ENCODE measurements at regions of chr16 and their contacts with region 1.

Region 1: DNA sequence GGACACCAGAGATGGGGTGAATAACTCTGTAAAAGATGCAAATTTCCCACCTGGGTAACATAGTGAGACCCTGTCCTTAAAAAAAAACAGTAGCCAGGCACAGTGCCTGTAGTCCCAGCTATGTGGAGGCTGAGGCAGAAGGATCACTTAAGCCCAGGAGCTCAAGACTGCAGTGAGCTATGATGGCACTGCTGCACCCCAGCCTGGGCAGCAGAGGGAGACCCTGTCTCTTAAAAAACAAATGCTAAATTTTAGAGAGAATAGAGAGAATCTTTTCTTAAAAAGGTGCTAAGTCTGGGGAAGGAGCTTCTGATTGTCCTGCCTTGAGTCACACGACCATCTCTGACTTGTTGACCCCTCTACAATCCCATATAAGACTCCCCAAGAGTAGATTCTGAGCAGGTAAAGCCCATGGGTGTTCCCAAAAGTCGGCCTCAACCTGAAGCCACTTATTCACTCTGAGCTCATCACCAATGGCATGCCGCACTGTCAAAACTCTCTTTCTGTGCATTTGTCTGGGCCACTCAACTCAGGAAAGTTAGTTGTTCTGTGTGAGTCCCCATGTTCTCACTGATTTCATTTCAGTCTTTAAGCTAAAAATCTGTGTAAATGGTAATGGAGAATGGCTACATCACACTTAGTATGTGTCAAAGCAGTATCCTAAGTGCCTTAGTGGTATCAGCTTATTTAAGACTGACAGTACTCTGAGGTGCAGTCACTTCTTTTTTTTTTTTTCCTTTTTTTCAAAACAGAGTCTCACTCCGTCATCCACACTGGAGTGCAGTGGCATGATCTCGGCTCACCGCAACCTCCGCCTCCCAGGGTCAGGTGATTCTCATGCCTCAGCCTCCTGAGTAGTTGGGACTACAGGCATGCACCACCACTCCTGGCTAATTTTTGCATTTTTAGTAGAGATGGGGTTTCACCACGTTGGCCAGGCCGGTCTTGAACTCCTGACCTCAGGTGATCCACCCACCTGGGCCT is 41.6 kb downstream of the PRKCB start:
- DNase-seq: peak in 5 of 9 donors; percentile 31 to 43 (median 35)
- ATAC-seq: peak; percentile 43
- H3K4me3 ChIP-seq: no peak overlapping the region
- H3K4me3 Mint-ChIP-seq: peak overlapping the region in 1 of 10 donors; percentile 1
- H3K27ac ChIP-seq: no peak overlapping the region
- H3K27ac Mint-ChIP-seq: peak overlapping the region in 6 of 9 donors; percentile 10 to 93 (median 74)
- H3K4me1 ChIP-seq: peaks cover 26 to 27% of the 10 kb centered on the region in 2 donors
- H3K4me1 Mint-ChIP-seq: peaks cover 53 to 77% (median 71%) of the 10 kb centered on the region in 7 donors
- H3K27me3 ChIP-seq: no peaks in the 10 kb centered on the region
- H3K27me3 Mint-ChIP-seq: no peaks in the 10 kb centered on the region

Region 2: DNA sequence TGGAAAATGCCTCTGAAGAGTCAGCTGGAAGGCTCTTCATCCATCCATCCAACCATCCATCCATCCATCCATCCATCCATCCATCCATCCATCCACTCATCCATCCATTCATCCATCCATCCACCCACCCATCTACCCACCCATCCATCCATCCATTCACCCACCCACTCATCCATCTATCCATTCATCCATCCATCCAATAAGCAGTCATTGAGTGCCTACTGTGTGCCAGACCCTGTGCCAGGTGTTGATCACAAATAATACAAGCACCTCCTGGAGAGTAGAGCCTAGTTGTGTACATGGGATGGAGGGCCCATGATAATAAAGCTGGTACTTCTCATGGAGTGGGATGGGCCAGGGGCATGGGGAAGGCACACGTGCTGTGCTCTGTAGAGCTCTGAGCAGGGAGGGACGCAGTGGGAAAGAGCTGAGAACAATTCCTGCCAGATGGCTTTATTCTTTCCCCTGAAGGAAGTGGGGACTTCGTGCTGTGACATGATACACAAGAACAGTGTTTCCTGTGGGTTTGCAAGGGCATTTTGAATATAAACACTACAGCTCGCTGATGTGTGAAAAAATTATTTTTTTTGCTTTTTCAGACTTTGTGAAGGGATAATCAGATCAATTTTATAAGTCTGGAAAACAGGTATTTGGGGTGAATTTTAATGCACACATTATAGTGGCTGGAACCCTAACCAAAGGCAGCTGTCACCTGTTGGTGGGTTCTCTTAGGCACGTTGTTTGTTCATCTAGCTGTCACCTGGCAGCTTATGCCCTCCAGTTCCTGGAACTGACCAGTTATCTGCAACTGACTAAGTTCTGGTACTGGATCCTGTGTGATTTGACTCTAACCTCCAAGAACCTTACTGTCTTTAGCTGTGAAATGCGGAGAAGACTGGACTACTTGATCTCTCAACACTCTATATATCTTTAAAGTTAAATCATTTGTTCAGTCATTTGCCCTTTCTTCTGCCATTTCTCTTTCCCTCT is 19.7 kb after region 1 on chr16:
- CTCF ChIA-PET with region 1: no interaction called
- POLR2A ChIA-PET with region 1: interaction called, 7 read pairs
- intact Hi-C with region 1: loop called in 1 of 2 experiments (anchors 2 kb)
- DNase-seq: peak in 4 of 9 donors; percentile 24 to 37 (median 29)
- ATAC-seq: peak; percentile 60
- H3K4me3 ChIP-seq: no peak overlapping the region
- H3K4me3 Mint-ChIP-seq: peak overlapping the region; percentile 45 to 82 (median 70)
- H3K27ac ChIP-seq: peak overlapping the region; percentile 15
- H3K27ac Mint-ChIP-seq: peak overlapping the region; percentile 30 to 86 (median 69)
- H3K4me1 ChIP-seq: peaks cover 17 to 23% of the 10 kb centered on the region in 2 donors
- H3K4me1 Mint-ChIP-seq: peaks cover 27 to 85% (median 75%) of the 10 kb centered on the region in 7 donors
- H3K27me3 ChIP-seq: no peaks in the 10 kb centered on the region
- H3K27me3 Mint-ChIP-seq: no peaks in the 10 kb centered on the region

Region 3: GRCh38 chr16:24036614-24037013 is 159.2 kb after region 1 on chr16:
- CTCF ChIA-PET with region 1: interaction called, 15 read pairs
- POLR2A ChIA-PET with region 1: interaction called, 3 read pairs
- intact Hi-C with region 1: loop called (anchors 1 kb)
- DNase-seq: peak in 8 of 9 donors; percentile 11 to 62 (median 30)
- ATAC-seq: peak; percentile 55
- H3K4me3 ChIP-seq: no peak overlapping the region
- H3K4me3 Mint-ChIP-seq: peak overlapping the region in 4 of 10 donors; percentile 18 to 92 (median 49)
- H3K27ac ChIP-seq: no peak overlapping the region
- H3K27ac Mint-ChIP-seq: peak overlapping the region in 4 of 9 donors; percentile 19 to 92 (median 54)
- H3K4me1 ChIP-seq: peaks cover 14 to 38% of the 10 kb centered on the region in 2 donors
- H3K4me1 Mint-ChIP-seq: peaks cover 27 to 51% (median 45%) of the 10 kb centered on the region in 7 donors
- H3K27me3 ChIP-seq: no peaks in the 10 kb centered on the region
- H3K27me3 Mint-ChIP-seq: no peaks in the 10 kb centered on the region

Region 4: DNA sequence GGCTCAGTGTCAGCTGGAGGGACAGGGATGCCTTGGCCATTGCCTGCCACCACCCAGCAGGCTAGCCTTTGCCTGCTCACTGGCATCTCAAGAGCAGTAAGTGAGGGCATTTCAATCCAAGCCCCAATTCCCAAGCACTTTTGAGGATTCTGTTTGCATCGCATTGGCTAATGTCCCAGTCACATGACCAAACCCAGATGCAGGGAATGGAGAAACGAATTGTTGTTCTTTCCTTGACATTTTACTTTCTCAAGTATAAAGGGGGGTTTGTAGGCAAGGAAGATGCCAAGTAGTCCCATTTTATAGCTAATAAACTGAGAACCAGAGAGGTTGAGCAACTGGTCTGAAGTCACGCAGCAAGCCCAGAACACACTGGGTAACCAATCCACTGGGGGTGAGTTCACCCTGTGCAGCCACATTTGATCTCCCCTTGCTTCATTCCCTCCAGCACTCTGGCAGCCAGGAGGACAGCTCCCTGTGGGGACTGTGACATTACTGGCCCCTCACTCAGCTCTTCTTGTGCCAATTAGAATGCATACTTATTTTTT is 184.9 kb after region 1 on chr16:
- CTCF ChIA-PET with region 1: no interaction called
- POLR2A ChIA-PET with region 1: no interaction called
- intact Hi-C with region 1: no loop called
- DNase-seq: no peak
- ATAC-seq: no peak
- H3K4me3 ChIP-seq: no peak overlapping the region
- H3K4me3 Mint-ChIP-seq: no peak overlapping the region
- H3K27ac ChIP-seq: no peak overlapping the region
- H3K27ac Mint-ChIP-seq: peak overlapping the region in 2 of 9 donors; percentile 62 to 68
- H3K4me1 ChIP-seq: no peaks in the 10 kb centered on the region
- H3K4me1 Mint-ChIP-seq: peaks cover 0 to 26% (median 8%) of the 10 kb centered on the region in 7 donors
- H3K27me3 ChIP-seq: no peaks in the 10 kb centered on the region
- H3K27me3 Mint-ChIP-seq: no peaks in the 10 kb centered on the region

Region 5: GRCh38 chr16:24228514-24228913 is 351.1 kb after region 1 on chr16:
- CTCF ChIA-PET with region 1: no interaction called
- POLR2A ChIA-PET with region 1: no interaction called
- intact Hi-C with region 1: no loop called
- DNase-seq: no peak
- ATAC-seq: no peak
- H3K4me3 ChIP-seq: no peak overlapping the region
- H3K4me3 Mint-ChIP-seq: no peak overlapping the region
- H3K27ac ChIP-seq: no peak overlapping the region
- H3K27ac Mint-ChIP-seq: no peak overlapping the region
- H3K4me1 ChIP-seq: no peaks in the 10 kb centered on the region
- H3K4me1 Mint-ChIP-seq: no peaks in the 10 kb centered on the region
- H3K27me3 ChIP-seq: no peaks in the 10 kb centered on the region
- H3K27me3 Mint-ChIP-seq: peaks cover 0 to 4% (median 0%) of the 10 kb centered on the region in 5 donors